Naive thymus-derived CD4-positive, alpha-beta T cell (primary cell): ENCODE measurements at regions of chr11 and their contacts with region 1.

Region 1: DNA sequence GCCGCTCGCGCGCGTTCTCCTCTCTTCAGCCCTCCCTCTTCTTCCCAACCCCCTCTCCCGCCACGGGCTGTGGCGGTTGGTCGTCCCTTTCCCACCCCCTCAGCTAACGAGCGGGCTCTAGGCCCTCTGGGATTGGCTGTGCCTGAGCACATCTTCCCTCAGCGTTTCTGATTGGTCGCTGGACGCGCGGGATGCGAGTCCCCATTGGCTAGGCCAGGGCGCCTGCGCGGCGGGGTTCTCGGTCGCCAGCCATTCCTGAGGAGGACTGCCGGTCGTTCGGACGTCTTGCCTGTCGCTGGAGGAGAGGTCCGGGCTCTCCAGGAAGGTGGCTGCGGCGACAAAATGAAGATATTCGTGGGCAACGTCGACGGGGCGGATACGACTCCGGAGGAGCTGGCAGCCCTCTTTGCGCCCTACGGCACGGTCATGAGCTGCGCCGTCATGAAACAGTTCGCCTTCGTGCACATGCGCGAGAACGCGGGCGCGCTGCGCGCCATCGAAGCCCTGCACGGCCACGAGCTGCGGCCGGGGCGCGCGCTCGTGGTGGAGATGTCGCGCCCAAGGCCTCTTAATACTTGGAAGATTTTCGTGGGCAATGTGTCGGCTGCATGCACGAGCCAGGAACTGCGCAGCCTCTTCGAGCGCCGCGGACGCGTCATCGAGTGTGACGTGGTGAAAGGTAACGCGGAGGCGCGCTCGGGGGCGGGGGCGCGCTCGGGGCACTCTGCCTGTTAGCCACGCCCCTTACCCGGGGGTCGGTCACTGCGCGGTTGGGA is at the start of gene RBM14:
- DNase-seq: peak; percentile 96 to 99 (median 99)
- ATAC-seq: peak; percentile 88
- H3K4me3 ChIP-seq: peak within 1 kb of the TSS; percentile 97
- H3K4me3 Mint-ChIP-seq: peak within 1 kb of the TSS; percentile 86 to 99 (median 98)
- H3K27ac ChIP-seq: peak within 1 kb of the TSS; percentile 83
- H3K27ac Mint-ChIP-seq: peak within 1 kb of the TSS; percentile 96 to 99 (median 98)
- H3K4me1 ChIP-seq: peaks cover 29 to 30% of the 10 kb centered on the region in 2 donors
- H3K4me1 Mint-ChIP-seq: peaks cover 26 to 55% (median 47%) of the 10 kb centered on the region in 7 donors
- H3K27me3 ChIP-seq: no peaks in the 10 kb centered on the region
- H3K27me3 Mint-ChIP-seq: peaks cover 0 to 3% (median 0%) of the 10 kb centered on the region in 5 donors
- total RNA-seq, gene RBM14: 165 to 543 (median 192) TPM

Region 2: GRCh38 chr11:66069715-66070603 is 546.6 kb before region 1 on chr11 and contains the start of gene PACS1:
- CTCF ChIA-PET with region 1: no interaction called
- POLR2A ChIA-PET with region 1: no interaction called
- intact Hi-C with region 1: loop called in 1 of 2 experiments (anchors 5 kb)
- DNase-seq: peak; percentile 64 to 85 (median 70)
- ATAC-seq: peak; percentile 85
- H3K4me3 ChIP-seq: peak within 1 kb of the TSS; percentile 69
- H3K4me3 Mint-ChIP-seq: peak within 1 kb of the TSS; percentile 91 to 100 (median 98)
- H3K27ac ChIP-seq: peak within 1 kb of the TSS; percentile 84
- H3K27ac Mint-ChIP-seq: peak within 1 kb of the TSS; percentile 90 to 99 (median 97)
- H3K4me1 ChIP-seq: peaks cover 23 to 24% of the 10 kb centered on the region in 2 donors
- H3K4me1 Mint-ChIP-seq: peaks cover 54 to 73% (median 63%) of the 10 kb centered on the region in 7 donors
- H3K27me3 ChIP-seq: no peaks in the 10 kb centered on the region
- H3K27me3 Mint-ChIP-seq: no peaks in the 10 kb centered on the region
- total RNA-seq, gene PACS1: 100 to 314 (median 252) TPM

Region 3: GRCh38 chr11:66466225-66467027 is 150.1 kb before region 1 on chr11 and contains the start of gene PELI3:
- CTCF ChIA-PET with region 1: no interaction called
- POLR2A ChIA-PET with region 1: interaction called, 5 read pairs
- intact Hi-C with region 1: loop called in 1 of 2 experiments (anchors 1 kb)
- DNase-seq: peak; percentile 86 to 95 (median 92)
- ATAC-seq: peak; percentile 97
- H3K4me3 ChIP-seq: peak within 1 kb of the TSS; percentile 78
- H3K4me3 Mint-ChIP-seq: peak within 1 kb of the TSS; percentile 89 to 96 (median 90)
- H3K27ac ChIP-seq: peak within 1 kb of the TSS; percentile 87
- H3K27ac Mint-ChIP-seq: peak within 1 kb of the TSS; percentile 87 to 97 (median 93)
- H3K4me1 ChIP-seq: peaks cover 8 to 10% of the 10 kb centered on the region in 2 donors
- H3K4me1 Mint-ChIP-seq: peaks cover 4 to 39% (median 24%) of the 10 kb centered on the region in 7 donors
- H3K27me3 ChIP-seq: no peaks in the 10 kb centered on the region
- H3K27me3 Mint-ChIP-seq: no peaks in the 10 kb centered on the region
- total RNA-seq, gene PELI3: 10.6 to 27.3 (median 18.6) TPM

Region 4: DNA sequence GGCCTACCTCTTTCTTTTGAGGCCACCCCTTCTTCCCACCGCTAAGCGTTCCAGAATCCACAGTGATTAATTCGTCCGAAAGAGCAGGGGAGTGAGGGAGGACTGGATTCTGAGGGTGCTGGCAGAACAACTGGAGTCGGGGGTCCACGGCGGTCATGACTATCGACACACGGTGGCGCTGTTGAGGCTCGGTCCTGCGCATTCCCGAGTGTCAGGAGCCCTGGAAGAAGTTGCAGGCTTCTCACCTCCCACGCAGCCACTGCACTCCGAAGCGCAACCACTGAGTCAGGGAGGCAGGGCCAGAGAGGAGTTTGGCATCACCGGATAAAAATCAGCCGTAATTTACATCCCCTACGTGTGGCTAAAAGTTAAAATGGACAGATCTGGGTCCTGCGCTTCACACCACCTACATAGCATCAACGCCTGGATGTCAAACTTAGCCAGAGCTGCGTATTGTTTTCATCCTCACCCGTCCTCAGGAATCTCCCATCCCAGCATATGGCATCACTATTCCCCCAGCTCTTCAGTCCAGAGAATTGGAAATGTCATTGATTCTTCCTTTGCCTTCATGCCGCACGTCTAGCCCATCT is 37.5 kb before region 1 on chr11:
- CTCF ChIA-PET with region 1: interaction called, 3 read pairs
- POLR2A ChIA-PET with region 1: interaction called, 6 read pairs
- intact Hi-C with region 1: loop called (anchors 5 kb)
- DNase-seq: peak; percentile 51 to 78 (median 66)
- ATAC-seq: peak; percentile 91
- H3K4me3 ChIP-seq: no peak overlapping the region
- H3K4me3 Mint-ChIP-seq: peak overlapping the region in 2 of 10 donors; percentile 22 to 53
- H3K27ac ChIP-seq: no peak overlapping the region
- H3K27ac Mint-ChIP-seq: peak overlapping the region in 2 of 9 donors; percentile 65 to 71
- H3K4me1 ChIP-seq: peaks cover 0 to 6% of the 10 kb centered on the region in 2 donors
- H3K4me1 Mint-ChIP-seq: peaks cover 0 to 11% (median 8%) of the 10 kb centered on the region in 7 donors
- H3K27me3 ChIP-seq: no peaks in the 10 kb centered on the region
- H3K27me3 Mint-ChIP-seq: peaks cover 0 to 25% (median 15%) of the 10 kb centered on the region in 5 donors

Region 5: DNA sequence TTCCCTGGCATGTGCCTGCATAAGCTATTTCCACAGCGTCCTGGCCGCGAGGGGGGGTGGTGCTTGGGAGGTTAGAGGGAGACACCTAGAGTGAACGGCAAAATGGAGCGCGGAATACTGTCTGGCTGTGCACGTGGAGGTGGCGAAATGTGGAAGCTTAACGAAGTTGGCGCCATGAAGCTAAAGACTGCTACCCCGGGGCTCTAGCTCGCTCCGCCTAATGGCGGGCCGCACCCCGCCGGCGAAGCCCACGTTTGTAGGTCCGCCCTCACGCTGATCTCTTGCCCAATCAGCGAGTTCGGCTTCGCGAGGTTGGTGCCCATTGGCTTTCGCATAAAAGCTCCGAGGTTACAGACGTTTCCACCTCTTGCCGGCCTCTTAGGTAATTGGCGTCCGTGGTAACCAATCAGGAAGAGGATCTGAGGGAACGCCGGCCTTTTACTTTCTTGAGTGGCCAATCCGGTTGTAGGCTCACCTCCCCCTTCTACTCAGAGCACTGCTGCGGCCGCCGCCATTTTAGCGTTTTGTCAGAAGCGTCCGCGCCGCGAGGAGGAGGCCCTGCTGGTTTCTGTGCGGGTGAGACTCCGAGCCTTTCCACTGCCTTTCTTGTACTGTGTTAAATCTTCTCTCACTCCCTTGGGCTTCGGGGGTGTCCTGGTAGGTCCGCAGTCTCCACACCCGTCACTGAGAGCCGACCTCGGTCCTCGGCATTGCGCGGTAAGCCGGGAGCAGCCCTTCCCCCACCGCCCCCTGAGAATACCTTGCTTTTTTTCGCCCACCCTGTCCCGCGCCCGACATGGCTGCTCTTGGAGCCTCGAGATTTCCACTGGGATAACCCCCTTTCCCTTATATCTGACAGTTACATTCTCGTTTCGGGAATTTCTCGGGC is 21.9 kb after region 1 on chr11 and contains the start of gene RBM4:
- CTCF ChIA-PET with region 1: interaction called, 13 read pairs
- POLR2A ChIA-PET with region 1: interaction called, 376 read pairs
- intact Hi-C with region 1: loop called (anchors 1 kb)
- DNase-seq: peak; percentile 80 to 99 (median 98)
- ATAC-seq: peak; percentile 93
- H3K4me3 ChIP-seq: peak within 1 kb of the TSS; percentile 91
- H3K4me3 Mint-ChIP-seq: peak within 1 kb of the TSS; percentile 92 to 100 (median 94)
- H3K27ac ChIP-seq: peak within 1 kb of the TSS; percentile 93
- H3K27ac Mint-ChIP-seq: peak within 1 kb of the TSS; percentile 87 to 98 (median 96)
- H3K4me1 ChIP-seq: peaks cover 44 to 48% of the 10 kb centered on the region in 2 donors
- H3K4me1 Mint-ChIP-seq: peaks cover 45 to 73% (median 68%) of the 10 kb centered on the region in 7 donors
- H3K27me3 ChIP-seq: no peaks in the 10 kb centered on the region
- H3K27me3 Mint-ChIP-seq: no peaks in the 10 kb centered on the region
- total RNA-seq, gene RBM4: 139 to 239 (median 198) TPM

Region 6: GRCh38 chr11:66842896-66843775 is 226.6 kb after region 1 on chr11 and contains the start of gene RCE1:
- CTCF ChIA-PET with region 1: no interaction called
- POLR2A ChIA-PET with region 1: interaction called, 6 read pairs
- intact Hi-C with region 1: loop called (anchors 1 to 2 kb)
- DNase-seq: peak; percentile 86 to 96 (median 91)
- ATAC-seq: peak; percentile 96
- H3K4me3 ChIP-seq: peak within 1 kb of the TSS; percentile 94
- H3K4me3 Mint-ChIP-seq: peak within 1 kb of the TSS; percentile 87 to 97 (median 93)
- H3K27ac ChIP-seq: peak within 1 kb of the TSS; percentile 96
- H3K27ac Mint-ChIP-seq: peak within 1 kb of the TSS; percentile 74 to 97 (median 92)
- H3K4me1 ChIP-seq: peaks cover 31 to 47% of the 10 kb centered on the region in 2 donors
- H3K4me1 Mint-ChIP-seq: peaks cover 31 to 58% (median 47%) of the 10 kb centered on the region in 7 donors
- H3K27me3 ChIP-seq: no peaks in the 10 kb centered on the region
- H3K27me3 Mint-ChIP-seq: no peaks in the 10 kb centered on the region
- total RNA-seq, gene RCE1: 24.6 to 47.1 (median 33.6) TPM